Psoas muscle (tissue), 8 donors: ENCODE measurements at regions of chr19 and their contacts with region 1.

Region 1: DNA sequence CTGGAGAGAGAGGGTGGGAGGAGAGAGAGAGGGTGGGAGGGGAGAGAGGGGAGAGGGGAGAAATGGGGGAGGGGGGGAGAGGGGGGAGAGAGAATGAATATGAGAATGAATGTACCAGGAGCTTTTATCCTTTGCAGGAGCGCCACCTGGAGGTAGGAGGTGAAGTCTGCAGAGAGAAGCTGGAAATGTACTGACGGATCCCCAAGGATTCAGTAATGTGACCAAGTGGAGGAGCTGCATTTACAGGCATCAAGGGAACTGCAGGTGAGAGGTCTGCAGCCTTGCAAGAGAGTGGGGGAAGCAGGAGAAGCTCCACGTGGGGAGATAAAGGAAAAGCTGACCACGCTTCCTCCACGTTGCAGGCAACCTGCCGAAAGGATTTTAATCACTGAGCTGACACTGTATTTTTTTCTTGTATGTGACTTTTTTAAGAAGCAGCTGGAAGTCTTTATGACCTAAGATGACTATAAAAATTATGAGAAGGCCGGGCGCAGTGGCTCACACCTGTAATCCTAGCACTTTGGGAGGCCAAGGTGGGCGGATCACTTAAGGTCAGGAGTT is 33.7 kb downstream of the VSTM1 start:
- DNase-seq: peak in 1 of 2 donors; percentile 25
- ATAC-seq: no peak
- H3K4me3 ChIP-seq: no peak overlapping the region
- H3K27ac ChIP-seq: no peak overlapping the region
- H3K4me1 ChIP-seq: no peaks in the 10 kb centered on the region
- H3K27me3 ChIP-seq: peaks cover 0 to 45% (median 0%) of the 10 kb centered on the region in 3 donors
- CTCF ChIP-seq: peak; percentile 22

Region 2: GRCh38 chr19:53792721-53793433 is 237.1 kb before region 1 on chr19:
- intact Hi-C with region 1: loop called in 1 of 2 experiments (anchors 5 kb)
- DNase-seq: peak; percentile 74 to 85
- ATAC-seq: peak in 3 of 4 donors; percentile 61 to 74 (median 68)
- H3K4me3 ChIP-seq: no peak overlapping the region
- H3K27ac ChIP-seq: no peak overlapping the region
- H3K4me1 ChIP-seq: no peaks in the 10 kb centered on the region
- H3K27me3 ChIP-seq: no peaks in the 10 kb centered on the region
- CTCF ChIP-seq: peak; percentile 83

Region 3: DNA sequence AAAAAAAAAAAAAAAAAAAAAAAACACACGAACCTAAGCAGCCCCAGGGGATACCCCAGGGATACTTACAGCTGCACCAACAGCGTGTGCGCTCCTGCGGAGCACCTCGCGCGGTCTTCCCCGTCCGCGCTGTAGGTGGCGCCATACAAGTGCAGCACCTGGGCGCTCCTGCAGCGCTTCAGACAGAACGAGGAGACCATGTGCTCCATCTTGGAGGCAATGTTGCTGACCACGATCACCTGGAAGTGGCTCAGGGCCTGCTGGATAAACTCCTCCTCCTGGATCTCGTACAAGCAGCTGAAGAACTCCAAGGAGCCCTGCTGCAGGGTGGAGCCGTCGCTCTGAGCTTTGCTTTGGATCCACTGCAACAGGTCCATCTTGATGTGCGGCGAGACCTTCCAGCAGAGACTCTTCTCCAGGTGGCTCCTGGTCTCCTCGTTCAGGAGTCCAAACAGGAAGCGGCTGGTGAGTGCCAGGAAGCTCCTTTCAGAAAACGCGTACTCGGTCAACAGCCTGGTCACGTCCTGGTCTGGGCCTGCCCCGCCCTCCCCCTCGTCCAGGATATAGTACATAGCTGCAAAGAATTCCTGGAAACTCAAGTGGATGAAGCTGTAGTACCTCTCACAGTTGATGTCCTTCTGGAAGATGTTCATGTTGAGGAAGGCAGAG is 220.4 kb before region 1 on chr19:
- intact Hi-C with region 1: loop called in 1 of 2 experiments (anchors 10 kb)
- DNase-seq: no peak
- ATAC-seq: no peak
- H3K4me3 ChIP-seq: peak overlapping the region; percentile 28
- H3K27ac ChIP-seq: no peak overlapping the region
- H3K4me1 ChIP-seq: no peaks in the 10 kb centered on the region
- H3K27me3 ChIP-seq: no peaks in the 10 kb centered on the region
- CTCF ChIP-seq: no peak